IMR-90 (cell line): ENCODE measurements at regions of chr18 and their contacts with region 1.

Region 1: GRCh38 chr18:64882896-64883295 is 734.0 kb upstream of the LINC00305 start:
- DNase-seq: no peak
- ATAC-seq: no peak
- H3K4me3 ChIP-seq: no peak overlapping the region
- H3K27ac ChIP-seq: no peak overlapping the region
- H3K4me1 ChIP-seq: no peaks in the 10 kb centered on the region
- H3K27me3 ChIP-seq: no peaks in the 10 kb centered on the region
- CTCF ChIP-seq: no peak
- POLR2A ChIP-seq: no peak
- RAD21 ChIP-seq: no peak

Region 2: DNA sequence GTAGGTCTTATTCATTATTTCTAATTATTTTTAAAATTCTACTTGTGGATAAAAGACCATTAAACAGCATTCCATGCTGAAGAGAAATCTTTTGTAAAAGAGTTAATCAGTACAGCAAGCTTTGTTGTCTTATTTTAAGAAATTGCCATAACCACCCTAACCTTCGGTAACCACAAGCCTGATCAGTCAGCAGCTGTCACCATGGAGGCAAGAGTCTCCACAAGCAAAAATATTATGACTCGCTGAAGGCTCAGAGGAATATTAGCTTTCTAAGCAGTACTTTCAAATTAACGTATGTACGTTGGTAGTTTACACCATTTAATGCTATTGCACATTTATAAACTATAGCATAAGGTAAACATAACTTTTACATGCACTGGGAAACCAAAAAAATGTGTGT is 83.5 kb before region 1 on chr18:
- CTCF ChIA-PET with region 1: no interaction called
- POLR2A ChIA-PET with region 1: no interaction called
- dilution Hi-C with region 1: no loop called
- in situ Hi-C with region 1: loop called (anchors 25 kb)
- intact Hi-C with region 1: no loop called
- DNase-seq: no peak
- ATAC-seq: no peak
- H3K4me3 ChIP-seq: no peak overlapping the region
- H3K27ac ChIP-seq: no peak overlapping the region
- H3K4me1 ChIP-seq: no peaks in the 10 kb centered on the region
- H3K27me3 ChIP-seq: no peaks in the 10 kb centered on the region
- CTCF ChIP-seq: no peak
- POLR2A ChIP-seq: no peak
- RAD21 ChIP-seq: no peak